ENCODE measurements at regions of chr6 and their contacts with region 1.

Region 1: GRCh38 chr6:44172731-44173500 is 14.3 kb downstream of the CAPN11 start:
- DNase-seq: peak; percentile 12
- H3K4me3 ChIP-seq: no peak overlapping the region
- H3K27me3 ChIP-seq: peaks cover 3% of the 10 kb centered on the region; the same call in 1 of the 2 replicates
- CTCF ChIP-seq: peak; percentile 93

Region 2: DNA sequence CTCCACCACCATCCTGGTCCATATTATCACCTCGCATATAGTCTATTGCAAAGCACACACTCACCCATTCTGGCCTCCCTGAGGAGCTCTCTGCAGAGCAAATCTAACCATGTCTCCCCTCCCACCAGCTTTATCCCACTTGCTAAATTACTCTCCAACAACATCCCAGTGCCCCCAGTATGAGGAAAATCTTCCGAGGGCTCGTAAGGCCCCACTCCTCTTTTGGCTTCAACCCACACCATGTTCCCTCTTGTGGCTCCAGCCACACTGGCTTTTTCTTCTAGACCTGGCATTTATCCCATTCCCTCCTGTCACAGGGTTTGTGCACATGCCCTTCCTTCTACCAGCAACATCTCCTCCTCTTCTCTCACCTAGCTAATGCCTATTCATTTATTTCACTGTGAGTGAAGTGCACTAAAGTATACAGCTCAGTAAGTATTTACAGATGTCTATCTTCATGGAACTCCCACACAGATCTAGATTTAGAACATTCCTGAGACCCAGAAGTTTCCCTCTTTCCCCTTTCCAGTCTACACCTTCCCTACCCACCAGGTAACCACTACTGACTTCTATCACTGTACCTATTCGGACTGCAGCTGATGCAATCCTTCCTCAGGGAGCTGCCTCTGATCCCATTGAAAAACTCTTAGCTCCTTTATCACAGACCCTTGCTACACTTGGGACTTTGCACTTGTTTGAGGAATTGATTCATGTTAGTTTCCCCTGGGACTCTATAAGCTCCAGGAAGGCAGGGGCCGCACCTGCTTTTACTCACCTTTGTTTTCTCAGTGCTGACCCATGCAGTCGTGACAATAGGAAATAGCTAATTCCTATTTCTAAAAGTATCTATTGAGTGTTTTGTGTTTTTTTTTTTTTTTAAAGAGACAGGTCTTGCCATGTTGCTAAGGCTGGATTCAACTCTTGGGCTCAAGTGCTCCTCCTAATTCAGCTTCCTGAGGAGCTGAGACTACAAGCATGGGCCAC is 61.2 kb before region 1 on chr6:
- CTCF ChIA-PET with region 1: no interaction called
- POLR2A ChIA-PET with region 1: no interaction called
- DNase-seq: no peak
- H3K4me3 ChIP-seq: no peak overlapping the region
- H3K27me3 ChIP-seq: no peaks in the 10 kb centered on the region
- CTCF ChIP-seq: no peak

Region 3: DNA sequence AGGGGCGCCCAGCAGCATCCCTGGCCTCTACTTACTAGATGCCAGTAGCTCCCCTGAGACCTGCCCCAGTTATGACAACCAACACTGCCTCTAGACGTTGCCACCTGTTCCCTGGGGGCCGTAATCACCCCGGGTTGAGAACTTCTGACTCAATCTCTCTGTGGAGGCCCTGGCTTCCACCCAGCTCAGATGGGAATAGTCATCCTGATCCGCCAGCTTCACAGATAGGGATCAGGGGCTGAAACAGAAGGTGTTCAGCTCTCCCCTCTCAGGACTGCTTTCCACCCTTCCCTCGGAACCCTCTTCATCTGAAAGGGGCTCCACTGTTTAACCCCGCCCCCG is 10.9 kb before region 1 on chr6:
- CTCF ChIA-PET with region 1: interaction called, 39 read pairs
- POLR2A ChIA-PET with region 1: no interaction called
- DNase-seq: no peak
- H3K4me3 ChIP-seq: no peak overlapping the region
- H3K27me3 ChIP-seq: peaks cover 19% of the 10 kb centered on the region
- CTCF ChIP-seq: no peak

Region 4: DNA sequence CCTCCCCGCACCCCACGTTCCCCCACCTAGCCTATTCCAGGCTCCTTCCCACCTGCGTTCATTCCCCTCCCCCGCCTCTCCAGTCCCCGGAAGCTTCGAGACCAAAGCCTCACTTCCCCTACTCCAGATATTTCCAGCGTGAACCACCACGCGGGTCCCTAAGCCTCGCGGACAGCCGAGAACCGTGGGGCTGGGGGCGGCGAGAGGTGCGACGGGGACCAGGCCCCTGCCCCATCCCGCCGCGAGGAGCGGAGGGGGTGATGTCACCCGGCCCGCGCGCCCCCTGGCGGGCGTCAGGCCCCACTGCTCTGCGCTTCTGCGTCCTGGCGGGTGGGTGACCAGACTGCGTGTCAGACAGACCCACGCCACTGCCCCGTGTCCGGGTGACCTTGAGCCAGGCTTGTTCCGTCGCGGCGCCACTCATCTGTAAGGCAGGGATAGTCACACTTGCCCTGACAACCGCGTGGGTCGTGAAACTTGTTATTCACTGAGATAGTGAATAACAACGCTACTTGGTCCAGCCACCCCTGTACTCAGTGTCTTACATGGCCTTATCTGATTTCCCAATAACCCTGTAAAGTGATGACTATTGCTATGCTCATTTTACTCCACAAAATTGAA is 65.0 kb after region 1 on chr6:
- CTCF ChIA-PET with region 1: interaction called, 20 read pairs
- POLR2A ChIA-PET with region 1: no interaction called
- DNase-seq: no peak
- H3K4me3 ChIP-seq: peak overlapping the region; percentile 53
- H3K27me3 ChIP-seq: no peaks in the 10 kb centered on the region
- CTCF ChIP-seq: peak; percentile 88

Region 5: GRCh38 chr6:44257025-44257752 is 84.3 kb after region 1 on chr6 and contains the start of gene SLC35B2:
- CTCF ChIA-PET with region 1: interaction called, 26 read pairs
- POLR2A ChIA-PET with region 1: no interaction called
- DNase-seq: no peak
- H3K4me3 ChIP-seq: peak within 1 kb of the TSS; percentile 81
- H3K27me3 ChIP-seq: no peaks in the 10 kb centered on the region
- CTCF ChIP-seq: peak; percentile 41
- polyA plus RNA-seq, gene SLC35B2: 104 and 145 TPM in 2 replicates

Measured in BJ (cell line).